ENCODE measurements at regions of chr6 and their contacts with region 1.

Region 1: GRCh38 chr6:113960795-113961194 is 10.2 kb downstream of the HDAC2 start:
- DNase-seq: no peak
- ATAC-seq: no peak
- H3K4me3 Mint-ChIP-seq: no peak overlapping the region
- H3K27ac Mint-ChIP-seq: no peak overlapping the region
- H3K4me1 Mint-ChIP-seq: peaks cover 38% of the 10 kb centered on the region
- H3K27me3 Mint-ChIP-seq: no peaks in the 10 kb centered on the region
- CTCF ChIP-seq: no peak

Region 2: DNA sequence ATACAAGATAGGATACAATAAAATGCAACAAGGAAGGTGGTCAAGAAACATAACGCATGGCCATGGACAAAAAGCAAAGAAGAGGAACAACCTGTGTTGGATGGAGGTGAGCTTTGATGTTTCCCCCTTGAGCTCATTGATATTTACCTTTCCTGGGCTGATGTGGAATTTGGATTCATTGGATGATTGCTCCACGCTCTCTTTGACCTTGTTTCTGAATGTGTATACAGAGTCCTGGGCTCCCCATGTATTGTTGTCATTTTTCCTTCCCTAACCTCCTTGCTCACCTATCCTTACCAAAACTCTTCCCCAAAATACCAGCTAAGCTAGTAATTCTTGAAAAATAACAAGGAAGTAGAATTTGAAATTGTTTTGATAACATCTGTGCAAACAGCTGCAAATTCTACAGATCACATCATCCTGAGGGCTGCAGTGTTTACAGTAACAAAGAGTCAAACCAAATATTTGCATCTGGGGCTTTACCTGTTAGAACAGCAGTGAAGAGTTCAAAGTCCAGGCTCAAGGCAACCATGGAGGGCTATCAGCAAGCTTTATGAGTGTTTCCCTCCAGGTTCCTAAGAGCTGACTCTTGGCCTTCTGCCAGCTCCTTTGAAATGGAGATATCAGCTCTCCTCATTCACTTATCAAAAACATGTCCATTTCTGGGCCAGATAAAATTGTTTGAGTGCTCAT is 317.9 kb before region 1 on chr6:
- CTCF ChIA-PET with region 1: no interaction called
- POLR2A ChIA-PET with region 1: no interaction called
- intact Hi-C with region 1: no loop called
- DNase-seq: no peak
- ATAC-seq: no peak
- H3K4me3 Mint-ChIP-seq: no peak overlapping the region
- H3K27ac Mint-ChIP-seq: no peak overlapping the region
- H3K4me1 Mint-ChIP-seq: no peaks in the 10 kb centered on the region
- H3K27me3 Mint-ChIP-seq: peaks cover 3% of the 10 kb centered on the region
- CTCF ChIP-seq: no peak

Region 3: DNA sequence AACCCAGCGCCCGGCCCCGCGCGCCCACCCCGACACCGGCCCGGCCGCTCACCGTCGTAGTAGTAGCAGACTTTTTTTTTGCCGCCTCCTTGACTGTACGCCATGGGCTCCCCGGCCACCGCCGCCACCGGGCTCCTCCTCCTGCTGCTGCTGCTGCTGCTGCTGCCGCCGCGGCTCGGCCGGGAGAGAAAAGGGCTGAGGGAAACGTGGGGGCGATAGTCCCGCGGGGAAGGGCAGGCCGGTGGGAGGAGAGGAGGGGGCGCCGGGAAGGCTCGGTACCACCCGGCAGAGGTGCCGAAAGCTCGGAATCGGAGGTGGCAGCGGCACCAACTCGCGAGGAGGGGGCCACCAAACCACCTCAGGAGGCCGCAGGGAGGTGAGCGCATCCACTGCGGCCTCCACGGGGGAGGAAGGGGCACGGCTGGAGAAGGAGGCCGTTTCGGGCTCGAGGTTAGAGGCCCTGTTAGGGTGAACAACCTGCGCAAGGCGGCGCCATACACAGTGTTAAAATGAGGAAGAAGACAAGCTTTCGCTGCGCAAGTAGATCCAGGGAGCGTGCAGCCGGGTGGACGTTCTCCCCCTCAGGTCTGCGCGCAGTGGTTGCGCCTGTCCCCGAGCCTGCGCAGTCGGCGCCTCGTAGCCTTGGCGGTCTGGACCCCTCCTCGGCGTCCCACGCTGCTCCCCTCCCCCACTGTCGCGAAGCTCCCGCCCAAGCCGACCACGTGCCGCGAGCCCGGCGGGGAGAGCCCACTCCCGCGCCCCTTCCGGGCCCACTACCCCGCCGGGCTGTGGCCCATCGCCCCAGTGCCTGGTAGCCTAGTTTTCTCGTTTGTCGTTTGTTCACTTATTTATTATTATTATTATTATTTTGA is 10.2 kb after region 1 on chr6 and contains the start of gene HDAC2:
- CTCF ChIA-PET with region 1: interaction called, 4 read pairs
- POLR2A ChIA-PET with region 1: interaction called, 12 read pairs
- intact Hi-C with region 1: no loop called
- DNase-seq: peak; percentile 84
- ATAC-seq: peak; percentile 89
- H3K4me3 Mint-ChIP-seq: peak within 1 kb of the TSS; percentile 98
- H3K27ac Mint-ChIP-seq: peak within 1 kb of the TSS; percentile 98
- H3K4me1 Mint-ChIP-seq: peaks cover 33% of the 10 kb centered on the region
- H3K27me3 Mint-ChIP-seq: no peaks in the 10 kb centered on the region
- CTCF ChIP-seq: no peak
- total RNA-seq, gene HDAC2: 90.5 to 91.7 TPM

Region 4: DNA sequence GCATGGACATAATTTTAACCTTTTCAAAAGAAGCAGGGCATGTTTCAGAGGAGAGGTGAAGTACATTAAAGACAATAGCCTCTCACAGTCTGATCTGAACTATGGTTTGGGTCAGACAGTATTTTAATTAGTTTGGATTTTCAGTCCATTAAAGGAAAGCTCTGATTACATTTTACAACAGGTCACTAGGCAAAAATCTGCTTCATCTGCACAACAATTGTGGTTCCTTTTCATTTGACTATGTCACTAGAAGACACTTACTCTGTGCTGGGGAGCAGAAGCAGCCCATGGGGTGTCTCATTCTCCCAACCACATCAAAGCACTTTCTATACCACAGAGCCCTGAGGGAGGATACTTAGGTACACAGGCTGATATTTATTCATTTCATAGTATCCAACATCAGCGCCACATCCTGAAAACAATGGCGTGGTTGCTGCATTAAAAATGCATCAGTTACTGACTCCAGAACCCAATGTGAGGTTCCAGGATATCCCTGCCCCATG is 46.7 kb after region 1 on chr6:
- CTCF ChIA-PET with region 1: no interaction called
- POLR2A ChIA-PET with region 1: no interaction called
- intact Hi-C with region 1: no loop called
- DNase-seq: peak; percentile 24
- ATAC-seq: peak; percentile 39
- H3K4me3 Mint-ChIP-seq: no peak overlapping the region
- H3K27ac Mint-ChIP-seq: no peak overlapping the region
- H3K4me1 Mint-ChIP-seq: peaks cover 8% of the 10 kb centered on the region
- H3K27me3 Mint-ChIP-seq: peaks cover 9% of the 10 kb centered on the region
- CTCF ChIP-seq: no peak

Measured in activated CD8-positive, alpha-beta T cell treated with anti-CD3 and anti-CD28 coated beads for 36 hours (primary cell).